Vagina (tissue), 2 donors: ENCODE measurements at regions of chr15 and their contacts with region 1.

Region 1: GRCh38 chr15:49235446-49236124 is 65.5 kb downstream of the GALK2 start:
- DNase-seq: no peak
- H3K4me3 ChIP-seq: no peak overlapping the region
- H3K27ac ChIP-seq: no peak overlapping the region
- H3K4me1 ChIP-seq: peaks cover 9% of the 10 kb centered on the region
- H3K27me3 ChIP-seq: no peaks in the 10 kb centered on the region
- CTCF ChIP-seq: peak; percentile 56 to 62 (median 60)
- POLR2A ChIP-seq: no peak

Region 2: GRCh38 chr15:49421991-49422390 is 186.4 kb after region 1 on chr15:
- intact Hi-C with region 1: loop called (anchors 5 kb)
- DNase-seq: no peak
- H3K4me3 ChIP-seq: peak overlapping the region; percentile 3 to 42
- H3K27ac ChIP-seq: peak overlapping the region; percentile 74
- H3K4me1 ChIP-seq: no peaks in the 10 kb centered on the region
- H3K27me3 ChIP-seq: no peaks in the 10 kb centered on the region
- CTCF ChIP-seq: peak in 2 of 3 experiments; percentile 45 to 96
- POLR2A ChIP-seq: no peak

Region 3: GRCh38 chr15:50145451-50145872 is 909.9 kb after region 1 on chr15:
- intact Hi-C with region 1: loop called (anchors 10 kb)
- DNase-seq: no peak
- H3K4me3 ChIP-seq: no peak overlapping the region
- H3K27ac ChIP-seq: no peak overlapping the region
- H3K4me1 ChIP-seq: no peaks in the 10 kb centered on the region
- H3K27me3 ChIP-seq: no peaks in the 10 kb centered on the region
- CTCF ChIP-seq: peak; percentile 46 to 71 (median 55)
- POLR2A ChIP-seq: no peak